B cell (primary cell): ENCODE measurements at regions of chr16 and their contacts with region 1.

Region 1: GRCh38 chr16:67806428-67807147 is at the starts of genes RANBP10 and TSNAXIP1:
- DNase-seq: peak; percentile 98
- ATAC-seq: peak; percentile 89
- H3K4me3 ChIP-seq: peak within 1 kb of the TSS; percentile 89 to 99 (median 92)
- H3K4me3 Mint-ChIP-seq: peak within 1 kb of the TSS; percentile 97
- H3K27ac ChIP-seq: peak within 1 kb of the TSS; percentile 78 to 80
- H3K27ac Mint-ChIP-seq: peak within 1 kb of the TSS; percentile 94
- H3K4me1 ChIP-seq: peaks cover 40 to 51% of the 10 kb centered on the region in 2 donors
- H3K4me1 Mint-ChIP-seq: peaks cover 45% of the 10 kb centered on the region
- H3K27me3 ChIP-seq: no peaks in the 10 kb centered on the region
- H3K27me3 Mint-ChIP-seq: no peaks in the 10 kb centered on the region
- CTCF ChIP-seq: no peak
- total RNA-seq, gene RANBP10: 32.2 and 33.1 TPM in 2 replicates
- total RNA-seq, gene TSNAXIP1: 1.1 and 1.2 TPM in 2 replicates

Region 2: GRCh38 chr16:67667817-67668494 is 138.6 kb before region 1 on chr16:
- CTCF ChIA-PET with region 1: interaction called, 7 read pairs
- POLR2A ChIA-PET with region 1: interaction called, 3 read pairs
- intact Hi-C with region 1: loop called (anchors 1 kb)
- DNase-seq: peak; percentile 89
- ATAC-seq: peak; percentile 81
- H3K4me3 ChIP-seq: peak overlapping the region in 4 of 5 experiments; percentile 67 to 91 (median 80)
- H3K4me3 Mint-ChIP-seq: peak overlapping the region; percentile 91
- H3K27ac ChIP-seq: peak overlapping the region; percentile 77 to 86
- H3K27ac Mint-ChIP-seq: peak overlapping the region; percentile 84
- H3K4me1 ChIP-seq: peaks cover 36 to 49% of the 10 kb centered on the region in 2 donors
- H3K4me1 Mint-ChIP-seq: peaks cover 49% of the 10 kb centered on the region
- H3K27me3 ChIP-seq: no peaks in the 10 kb centered on the region
- H3K27me3 Mint-ChIP-seq: no peaks in the 10 kb centered on the region
- CTCF ChIP-seq: peak; percentile 75

Region 3: GRCh38 chr16:67719048-67719777 is 87.4 kb before region 1 on chr16 and contains the start of gene GFOD2:
- CTCF ChIA-PET with region 1: interaction called, 4 read pairs
- POLR2A ChIA-PET with region 1: interaction called, 5 read pairs
- intact Hi-C with region 1: loop called (anchors 1 kb)
- DNase-seq: peak; percentile 97
- ATAC-seq: peak; percentile 94
- H3K4me3 ChIP-seq: peak within 1 kb of the TSS; percentile 66 to 93 (median 87)
- H3K4me3 Mint-ChIP-seq: peak within 1 kb of the TSS; percentile 99
- H3K27ac ChIP-seq: peak within 1 kb of the TSS; percentile 89 to 93
- H3K27ac Mint-ChIP-seq: peak within 1 kb of the TSS; percentile 98
- H3K4me1 ChIP-seq: peaks cover 18 to 20% of the 10 kb centered on the region in 2 donors
- H3K4me1 Mint-ChIP-seq: peaks cover 38% of the 10 kb centered on the region
- H3K27me3 ChIP-seq: no peaks in the 10 kb centered on the region
- H3K27me3 Mint-ChIP-seq: no peaks in the 10 kb centered on the region
- CTCF ChIP-seq: no peak
- total RNA-seq, gene GFOD2: 18.1 and 18.2 TPM in 2 replicates

Region 4: GRCh38 chr16:67833418-67834241 is 27.0 kb after region 1 on chr16:
- CTCF ChIA-PET with region 1: interaction called, 3 read pairs
- POLR2A ChIA-PET with region 1: no interaction called
- intact Hi-C with region 1: loop called (anchors 1 kb)
- DNase-seq: peak; percentile 92
- ATAC-seq: peak; percentile 100
- H3K4me3 ChIP-seq: peak overlapping the region; percentile 47 to 76 (median 75)
- H3K4me3 Mint-ChIP-seq: peak overlapping the region; percentile 89
- H3K27ac ChIP-seq: peak overlapping the region in 1 of 2 donors; percentile 64
- H3K27ac Mint-ChIP-seq: peak overlapping the region; percentile 83
- H3K4me1 ChIP-seq: peaks cover 12 to 16% of the 10 kb centered on the region in 2 donors
- H3K4me1 Mint-ChIP-seq: peaks cover 16% of the 10 kb centered on the region
- H3K27me3 ChIP-seq: no peaks in the 10 kb centered on the region
- H3K27me3 Mint-ChIP-seq: no peaks in the 10 kb centered on the region
- CTCF ChIP-seq: no peak

Region 5: DNA sequence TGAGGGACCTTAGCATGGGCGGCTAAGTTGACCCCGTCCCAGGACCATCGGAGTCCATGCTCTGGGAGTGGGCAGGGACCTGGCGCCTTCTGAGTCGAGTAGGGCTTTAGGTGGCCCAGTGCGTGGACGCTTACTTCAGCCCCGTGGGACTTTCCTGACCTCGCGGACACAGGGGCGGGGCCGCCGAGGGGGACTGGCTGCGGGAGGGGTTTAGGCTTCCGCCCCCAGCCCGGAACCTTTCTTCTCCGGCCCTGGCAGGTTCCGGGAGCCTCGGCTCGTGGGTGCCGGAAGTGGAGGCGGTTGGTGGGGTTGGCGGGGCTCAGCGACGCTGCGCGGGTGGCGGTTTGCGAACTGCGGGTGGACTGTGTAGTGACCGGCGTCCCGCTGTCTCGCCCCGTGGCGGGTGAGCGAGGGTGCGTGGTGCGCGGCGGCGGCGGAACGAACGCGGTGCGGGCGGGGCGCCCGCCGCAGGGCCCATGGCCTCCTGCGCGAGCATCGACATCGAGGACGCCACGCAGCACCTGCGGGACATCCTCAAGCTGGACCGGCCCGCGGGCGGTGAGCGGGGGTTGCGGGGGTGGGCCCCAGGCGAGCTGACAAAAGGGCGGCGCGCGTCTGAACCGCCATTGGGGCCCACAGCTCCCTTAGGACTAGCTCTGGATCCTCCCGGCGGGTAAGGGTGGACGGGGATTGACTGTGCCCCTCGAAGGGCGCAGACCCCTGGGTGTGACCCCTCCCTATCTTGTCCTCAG is 66.4 kb after region 1 on chr16 and contains the start of gene EDC4:
- CTCF ChIA-PET with region 1: no interaction called
- POLR2A ChIA-PET with region 1: no interaction called
- intact Hi-C with region 1: loop called (anchors 2 kb)
- DNase-seq: peak; percentile 90
- ATAC-seq: peak; percentile 90
- H3K4me3 ChIP-seq: peak within 1 kb of the TSS; percentile 59 to 98 (median 88)
- H3K4me3 Mint-ChIP-seq: peak within 1 kb of the TSS; percentile 91
- H3K27ac ChIP-seq: peak within 1 kb of the TSS; percentile 74 to 81
- H3K27ac Mint-ChIP-seq: peak within 1 kb of the TSS; percentile 90
- H3K4me1 ChIP-seq: peaks cover 23 to 25% of the 10 kb centered on the region in 2 donors
- H3K4me1 Mint-ChIP-seq: peaks cover 37% of the 10 kb centered on the region
- H3K27me3 ChIP-seq: no peaks in the 10 kb centered on the region
- H3K27me3 Mint-ChIP-seq: no peaks in the 10 kb centered on the region
- CTCF ChIP-seq: no peak
- total RNA-seq, gene EDC4: 83.3 and 95.1 TPM in 2 replicates

Region 6: GRCh38 chr16:67892899-67893742 is 86.5 kb after region 1 on chr16 and contains the start of gene PSKH1:
- CTCF ChIA-PET with region 1: no interaction called
- POLR2A ChIA-PET with region 1: interaction called, 3 read pairs
- intact Hi-C with region 1: loop called (anchors 1 kb)
- DNase-seq: peak; percentile 95
- ATAC-seq: peak; percentile 99
- H3K4me3 ChIP-seq: peak within 1 kb of the TSS; percentile 61 to 92 (median 76)
- H3K4me3 Mint-ChIP-seq: peak within 1 kb of the TSS; percentile 90
- H3K27ac ChIP-seq: peak within 1 kb of the TSS; percentile 77 to 95
- H3K27ac Mint-ChIP-seq: peak within 1 kb of the TSS; percentile 85
- H3K4me1 ChIP-seq: peaks cover 16 to 18% of the 10 kb centered on the region in 2 donors
- H3K4me1 Mint-ChIP-seq: peaks cover 31% of the 10 kb centered on the region
- H3K27me3 ChIP-seq: no peaks in the 10 kb centered on the region
- H3K27me3 Mint-ChIP-seq: no peaks in the 10 kb centered on the region
- CTCF ChIP-seq: no peak
- total RNA-seq, gene PSKH1: 29.1 TPM in 2 replicates

Region 7: GRCh38 chr16:68237243-68238028 is 430.8 kb after region 1 on chr16:
- CTCF ChIA-PET with region 1: no interaction called
- POLR2A ChIA-PET with region 1: no interaction called
- intact Hi-C with region 1: loop called (anchors 2 kb)
- DNase-seq: peak; percentile 88
- ATAC-seq: peak; percentile 81
- H3K4me3 ChIP-seq: peak overlapping the region; percentile 58 to 76 (median 68)
- H3K4me3 Mint-ChIP-seq: peak overlapping the region; percentile 98
- H3K27ac ChIP-seq: no peak overlapping the region
- H3K27ac Mint-ChIP-seq: peak overlapping the region; percentile 83
- H3K4me1 ChIP-seq: peaks cover 22 to 42% of the 10 kb centered on the region in 2 donors
- H3K4me1 Mint-ChIP-seq: peaks cover 39% of the 10 kb centered on the region
- H3K27me3 ChIP-seq: no peaks in the 10 kb centered on the region
- H3K27me3 Mint-ChIP-seq: no peaks in the 10 kb centered on the region
- CTCF ChIP-seq: no peak